CD14-positive monocyte (primary cell): ENCODE measurements at regions of chr12 and their contacts with region 1.

Region 1: DNA sequence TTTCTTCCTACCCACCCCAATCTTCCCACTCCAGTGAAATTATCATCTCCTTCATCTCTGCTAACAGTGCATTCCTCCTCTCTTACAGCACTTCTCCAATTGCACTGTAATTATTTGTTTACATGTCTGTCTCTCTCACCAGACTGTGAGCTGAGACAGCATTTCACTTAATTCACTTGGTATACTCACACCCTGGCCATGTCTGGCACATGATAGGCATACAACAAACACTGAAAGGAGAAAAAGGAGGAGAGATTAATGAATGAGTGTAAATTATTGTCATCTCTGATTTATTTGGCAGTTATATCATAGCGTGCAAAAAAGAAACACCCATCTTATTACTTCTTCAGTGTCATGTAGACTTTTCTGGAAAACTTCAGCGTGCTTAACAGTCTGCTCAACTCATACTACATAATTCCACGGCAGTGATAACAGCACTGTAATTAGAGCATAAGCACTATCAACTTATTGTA is 452.3 kb downstream of the ADAMTS20 start:
- DNase-seq: no peak
- H3K4me3 ChIP-seq: no peak overlapping the region
- H3K4me3 Mint-ChIP-seq: no peak overlapping the region
- H3K27ac ChIP-seq: no peak overlapping the region
- H3K27ac Mint-ChIP-seq: no peak overlapping the region
- H3K4me1 ChIP-seq: no peaks in the 10 kb centered on the region
- H3K4me1 Mint-ChIP-seq: no peaks in the 10 kb centered on the region
- H3K27me3 ChIP-seq: no peaks in the 10 kb centered on the region
- H3K27me3 Mint-ChIP-seq: peaks cover 0 to 2% (median 0%) of the 10 kb centered on the region in 3 donors
- CTCF ChIP-seq: no peak

Region 2: GRCh38 chr12:43063650-43064049 is 36.1 kb before region 1 on chr12:
- intact Hi-C with region 1: loop called in 1 of 2 experiments (anchors 2 kb)
- DNase-seq: no peak
- H3K4me3 ChIP-seq: no peak overlapping the region
- H3K4me3 Mint-ChIP-seq: no peak overlapping the region
- H3K27ac ChIP-seq: no peak overlapping the region
- H3K27ac Mint-ChIP-seq: no peak overlapping the region
- H3K4me1 ChIP-seq: no peaks in the 10 kb centered on the region
- H3K4me1 Mint-ChIP-seq: no peaks in the 10 kb centered on the region
- H3K27me3 ChIP-seq: no peaks in the 10 kb centered on the region
- H3K27me3 Mint-ChIP-seq: no peaks in the 10 kb centered on the region
- CTCF ChIP-seq: no peak

Region 3: GRCh38 chr12:43131304-43131703 is 31.6 kb after region 1 on chr12:
- intact Hi-C with region 1: no loop called
- DNase-seq: no peak
- H3K4me3 ChIP-seq: no peak overlapping the region
- H3K4me3 Mint-ChIP-seq: no peak overlapping the region
- H3K27ac ChIP-seq: no peak overlapping the region
- H3K27ac Mint-ChIP-seq: no peak overlapping the region
- H3K4me1 ChIP-seq: no peaks in the 10 kb centered on the region
- H3K4me1 Mint-ChIP-seq: no peaks in the 10 kb centered on the region
- H3K27me3 ChIP-seq: no peaks in the 10 kb centered on the region
- H3K27me3 Mint-ChIP-seq: peaks cover 0 to 1% (median 1%) of the 10 kb centered on the region in 3 donors
- CTCF ChIP-seq: no peak